Sigmoid colon (tissue), 7 donors: ENCODE measurements at regions of chr7 and their contacts with region 1.

Region 1: GRCh38 chr7:129218514-129219062 is 6.2 kb upstream of the AHCYL2 start:
- DNase-seq: peak; percentile 90
- H3K4me3 ChIP-seq: no peak overlapping the region
- H3K27ac ChIP-seq: no peak overlapping the region
- H3K4me1 ChIP-seq: peaks cover 0 to 3% (median 0%) of the 10 kb centered on the region in 4 donors
- H3K27me3 ChIP-seq: no peaks in the 10 kb centered on the region
- CTCF ChIP-seq: peak; percentile 82 to 89 (median 86)
- EP300 ChIP-seq: no peak
- POLR2A ChIP-seq: no peak

Region 2: GRCh38 chr7:129271500-129272355 is 53.1 kb after region 1 on chr7:
- intact Hi-C with region 1: loop called (anchors 1 kb)
- DNase-seq: no peak
- H3K4me3 ChIP-seq: no peak overlapping the region
- H3K27ac ChIP-seq: no peak overlapping the region
- H3K4me1 ChIP-seq: no peaks in the 10 kb centered on the region
- H3K27me3 ChIP-seq: no peaks in the 10 kb centered on the region
- CTCF ChIP-seq: peak in 3 of 4 experiments; percentile 50 to 64 (median 59)
- EP300 ChIP-seq: no peak
- POLR2A ChIP-seq: no peak

Region 3: GRCh38 chr7:129298268-129298893 is 79.8 kb after region 1 on chr7:
- intact Hi-C with region 1: loop called (anchors 2 kb)
- DNase-seq: no peak
- H3K4me3 ChIP-seq: no peak overlapping the region
- H3K27ac ChIP-seq: no peak overlapping the region
- H3K4me1 ChIP-seq: peaks cover 0 to 6% (median 0%) of the 10 kb centered on the region in 4 donors
- H3K27me3 ChIP-seq: no peaks in the 10 kb centered on the region
- CTCF ChIP-seq: peak; percentile 9 to 56 (median 48)
- EP300 ChIP-seq: no peak
- POLR2A ChIP-seq: no peak